ENCODE measurements at regions of chr1 and their contacts with region 1.

Region 1: GRCh38 chr1:104531990-104532389 is 782.3 kb downstream of the AMY1C start:
- DNase-seq: no peak
- H3K4me3 Mint-ChIP-seq: no peak overlapping the region
- H3K27ac Mint-ChIP-seq: no peak overlapping the region
- H3K4me1 Mint-ChIP-seq: no peaks in the 10 kb centered on the region
- H3K27me3 Mint-ChIP-seq: no peaks in the 10 kb centered on the region
- CTCF ChIP-seq: no peak

Region 2: GRCh38 chr1:104574619-104575018 is 42.6 kb after region 1 on chr1:
- CTCF ChIA-PET with region 1: no interaction called
- intact Hi-C with region 1: loop called (anchors 2 kb)
- DNase-seq: no peak
- H3K4me3 Mint-ChIP-seq: no peak overlapping the region
- H3K27ac Mint-ChIP-seq: no peak overlapping the region
- H3K4me1 Mint-ChIP-seq: no peaks in the 10 kb centered on the region
- H3K27me3 Mint-ChIP-seq: no peaks in the 10 kb centered on the region
- CTCF ChIP-seq: no peak